HCT116 (cell line): ENCODE measurements at regions of chr3 and their contacts with region 1.

Region 1: DNA sequence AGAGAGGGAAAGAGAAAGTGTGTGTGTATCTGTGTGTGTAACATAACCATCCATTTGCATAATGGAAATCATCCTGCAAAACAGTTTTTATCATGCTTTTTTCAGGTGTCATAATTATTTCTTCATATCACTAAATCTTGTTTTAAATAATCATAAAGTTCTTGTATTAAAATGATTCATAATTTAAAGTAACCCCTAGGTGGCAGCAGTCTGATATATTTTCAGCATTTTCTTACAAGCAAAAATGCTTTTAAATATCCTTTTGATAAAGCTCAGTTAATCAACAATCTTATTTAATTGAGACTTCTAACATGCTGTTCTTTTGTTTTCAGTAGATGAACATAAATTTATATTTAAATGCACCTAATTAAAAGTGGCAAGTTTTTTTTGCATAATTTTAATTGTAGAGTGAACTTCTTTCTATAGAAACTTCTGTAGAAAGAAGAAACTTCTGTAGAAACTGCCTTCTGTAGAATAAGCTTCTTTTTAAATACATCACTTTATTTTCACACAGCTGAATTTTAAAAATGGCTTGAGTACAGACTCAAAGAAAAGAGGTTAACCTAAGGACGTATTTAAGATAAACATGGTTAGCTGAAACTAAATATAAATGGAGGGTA is 72.5 kb downstream of the OPA1 start:
- DNase-seq: peak; percentile 23
- ATAC-seq: no peak
- H3K4me3 ChIP-seq: no peak overlapping the region
- H3K27ac ChIP-seq: no peak overlapping the region
- H3K4me1 ChIP-seq: no peaks in the 10 kb centered on the region
- H3K27me3 ChIP-seq: no peaks in the 10 kb centered on the region
- CTCF ChIP-seq: peak; percentile 20 to 59 (median 35); a peak in 4 of 6 replicates
- POLR2A ChIP-seq: no peak
- RAD21 ChIP-seq: peak; percentile 49

Region 2: DNA sequence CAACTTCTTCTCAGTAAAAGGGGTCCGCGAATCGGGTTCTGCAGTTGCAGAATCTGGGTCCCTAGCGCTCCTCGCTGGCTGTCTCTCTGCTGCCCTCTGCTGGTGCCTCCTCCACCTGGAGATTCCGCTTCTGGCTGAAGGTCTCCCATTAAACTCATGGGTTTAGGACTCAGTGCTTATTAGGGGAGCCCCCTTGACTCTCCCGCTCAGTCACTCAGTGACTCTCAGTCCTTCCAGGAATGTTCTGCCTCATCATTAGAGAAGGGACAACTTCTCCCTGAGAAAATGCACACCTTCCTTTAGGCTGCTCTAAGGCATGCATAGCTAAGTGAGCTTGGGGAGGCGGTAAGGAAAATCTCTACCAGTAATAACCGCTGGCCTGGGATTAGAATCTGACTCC is 678.5 kb after region 1 on chr3:
- CTCF ChIA-PET with region 1: interaction called, 10 read pairs
- POLR2A ChIA-PET with region 1: no interaction called
- RAD21 ChIA-PET with region 1: no interaction called
- intact Hi-C with region 1: no loop called
- DNase-seq: peak; percentile 28
- ATAC-seq: peak; percentile 88
- H3K4me3 ChIP-seq: no peak overlapping the region
- H3K27ac ChIP-seq: no peak overlapping the region
- H3K4me1 ChIP-seq: no peaks in the 10 kb centered on the region
- H3K27me3 ChIP-seq: no peaks in the 10 kb centered on the region
- CTCF ChIP-seq: peak; percentile 79 to 98 (median 97)
- POLR2A ChIP-seq: no peak
- RAD21 ChIP-seq: peak; percentile 85

Region 3: GRCh38 chr3:194404365-194405140 is 739.1 kb after region 1 on chr3:
- CTCF ChIA-PET with region 1: no interaction called
- POLR2A ChIA-PET with region 1: no interaction called
- RAD21 ChIA-PET with region 1: no interaction called
- intact Hi-C with region 1: loop called (anchors 10 kb)
- DNase-seq: peak; percentile 49
- ATAC-seq: peak; percentile 69
- H3K4me3 ChIP-seq: no peak overlapping the region
- H3K27ac ChIP-seq: no peak overlapping the region
- H3K4me1 ChIP-seq: no peaks in the 10 kb centered on the region; a peak in 1 of 4 replicates
- H3K27me3 ChIP-seq: no peaks in the 10 kb centered on the region
- CTCF ChIP-seq: peak; percentile 50 to 81 (median 64)
- POLR2A ChIP-seq: no peak
- RAD21 ChIP-seq: peak; percentile 74